ENCODE measurements at regions of chr14 and their contacts with region 1.

Region 1: GRCh38 chr14:72824051-72824450 is 69.8 kb downstream of the DPF3 start:
- DNase-seq: no peak
- H3K4me3 ChIP-seq: no peak overlapping the region
- H3K27ac ChIP-seq: no peak overlapping the region
- H3K4me1 ChIP-seq: no peaks in the 10 kb centered on the region
- H3K27me3 ChIP-seq: peaks cover 52% of the 10 kb centered on the region
- CTCF ChIP-seq: no peak

Region 2: DNA sequence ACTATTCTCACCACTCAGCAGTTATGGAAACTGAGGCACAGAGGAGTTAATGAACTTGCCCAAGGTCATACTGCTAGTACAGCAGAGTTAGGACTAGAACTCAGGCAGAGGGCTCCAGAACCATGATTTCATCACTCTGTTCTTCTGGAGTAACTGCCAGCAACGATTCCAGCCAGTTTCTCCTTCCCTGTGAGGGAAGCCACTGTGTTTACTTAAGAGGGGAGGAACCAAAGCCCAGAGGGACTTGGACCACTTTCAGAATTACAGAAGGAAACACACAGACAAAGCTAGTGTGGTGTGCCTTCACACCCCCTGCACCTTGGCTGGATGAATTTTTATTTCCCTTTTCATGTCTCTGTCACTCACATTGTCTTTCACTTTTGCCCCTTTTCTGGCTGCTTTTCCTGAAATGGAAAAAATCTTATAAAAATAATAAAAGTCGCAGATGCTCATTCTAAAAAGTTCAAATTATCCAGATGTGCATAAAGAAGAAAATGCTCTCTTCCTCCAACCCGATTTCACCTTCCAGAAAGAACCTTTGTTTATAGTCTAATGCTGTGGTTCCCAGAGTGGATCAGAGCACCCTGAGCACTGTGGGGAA is 328.3 kb before region 1 on chr14:
- CTCF ChIA-PET with region 1: no interaction called
- POLR2A ChIA-PET with region 1: no interaction called
- intact Hi-C with region 1: no loop called
- DNase-seq: no peak
- H3K4me3 ChIP-seq: no peak overlapping the region
- H3K27ac ChIP-seq: no peak overlapping the region
- H3K4me1 ChIP-seq: no peaks in the 10 kb centered on the region
- H3K27me3 ChIP-seq: peaks cover 21% of the 10 kb centered on the region
- CTCF ChIP-seq: no peak

Region 3: DNA sequence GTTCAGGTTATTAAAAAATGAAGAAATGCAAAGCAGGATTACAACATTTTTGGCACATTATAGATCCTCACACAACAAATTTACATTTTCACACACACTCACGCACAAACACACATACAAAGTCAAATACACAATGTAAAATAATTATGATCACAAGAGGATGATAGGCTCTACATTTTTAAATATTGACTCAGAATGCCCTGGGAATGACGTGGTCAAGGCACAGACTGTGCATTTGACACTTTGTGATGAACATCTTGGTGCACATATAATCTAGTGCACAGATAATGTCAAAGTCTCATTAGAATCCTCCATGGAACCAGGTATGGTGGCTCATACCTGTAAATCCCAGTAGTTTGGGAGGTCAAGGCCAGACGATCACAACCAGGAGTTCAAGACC is 20.5 kb after region 1 on chr14:
- CTCF ChIA-PET with region 1: no interaction called
- POLR2A ChIA-PET with region 1: no interaction called
- intact Hi-C with region 1: no loop called
- DNase-seq: no peak
- H3K4me3 ChIP-seq: no peak overlapping the region
- H3K27ac ChIP-seq: no peak overlapping the region
- H3K4me1 ChIP-seq: no peaks in the 10 kb centered on the region
- H3K27me3 ChIP-seq: peaks cover 91% of the 10 kb centered on the region
- CTCF ChIP-seq: no peak

Region 4: GRCh38 chr14:72856530-72857266 is 32.6 kb after region 1 on chr14:
- CTCF ChIA-PET with region 1: no interaction called
- POLR2A ChIA-PET with region 1: interaction called, 24 read pairs
- intact Hi-C with region 1: no loop called
- DNase-seq: no peak
- H3K4me3 ChIP-seq: no peak overlapping the region
- H3K27ac ChIP-seq: no peak overlapping the region
- H3K4me1 ChIP-seq: no peaks in the 10 kb centered on the region
- H3K27me3 ChIP-seq: peaks cover 87% of the 10 kb centered on the region
- CTCF ChIP-seq: no peak

Region 5: GRCh38 chr14:74627076-74627475 is 1803.0 kb after region 1 on chr14:
- CTCF ChIA-PET with region 1: no interaction called
- POLR2A ChIA-PET with region 1: interaction called, 12 read pairs
- intact Hi-C with region 1: no loop called
- DNase-seq: no peak
- H3K4me3 ChIP-seq: no peak overlapping the region
- H3K27ac ChIP-seq: no peak overlapping the region
- H3K4me1 ChIP-seq: peaks cover 15% of the 10 kb centered on the region
- H3K27me3 ChIP-seq: no peaks in the 10 kb centered on the region
- CTCF ChIP-seq: no peak